MCF 10A (cell line): ENCODE measurements at regions of chr1 and their contacts with region 1.

Region 1: GRCh38 chr1:54564312-54565112 is 16.5 kb downstream of the ACOT11 start:
- DNase-seq: peak; percentile 91
- H3K4me3 Mint-ChIP-seq: peak overlapping the region; percentile 62
- H3K27ac Mint-ChIP-seq: peak overlapping the region; percentile 32
- H3K4me1 Mint-ChIP-seq: peaks cover 34% of the 10 kb centered on the region
- H3K27me3 Mint-ChIP-seq: no peaks in the 10 kb centered on the region
- CTCF ChIP-seq: no peak

Region 2: GRCh38 chr1:54474639-54475251 is 89.8 kb before region 1 on chr1:
- CTCF ChIA-PET with region 1: no interaction called
- POLR2A ChIA-PET with region 1: no interaction called
- intact Hi-C with region 1: no loop called
- DNase-seq: no peak
- H3K4me3 Mint-ChIP-seq: no peak overlapping the region
- H3K27ac Mint-ChIP-seq: no peak overlapping the region
- H3K4me1 Mint-ChIP-seq: no peaks in the 10 kb centered on the region
- H3K27me3 Mint-ChIP-seq: peaks cover 25% of the 10 kb centered on the region
- CTCF ChIP-seq: no peak

Region 3: GRCh38 chr1:54542120-54542961 is 22.2 kb before region 1 on chr1:
- CTCF ChIA-PET with region 1: interaction called, 11 read pairs
- POLR2A ChIA-PET with region 1: interaction called, 33 read pairs
- intact Hi-C with region 1: no loop called
- DNase-seq: peak; percentile 95
- H3K4me3 Mint-ChIP-seq: peak overlapping the region; percentile 84
- H3K27ac Mint-ChIP-seq: peak overlapping the region; percentile 52
- H3K4me1 Mint-ChIP-seq: peaks cover 26% of the 10 kb centered on the region
- H3K27me3 Mint-ChIP-seq: no peaks in the 10 kb centered on the region
- CTCF ChIP-seq: no peak

Region 4: GRCh38 chr1:54547601-54548388 is 16.7 kb before region 1 on chr1 and contains the start of gene ACOT11:
- CTCF ChIA-PET with region 1: interaction called, 11 read pairs
- POLR2A ChIA-PET with region 1: interaction called, 33 read pairs
- intact Hi-C with region 1: no loop called
- DNase-seq: peak; percentile 22
- H3K4me3 Mint-ChIP-seq: no peak within 1 kb of the TSS
- H3K27ac Mint-ChIP-seq: no peak within 1 kb of the TSS
- H3K4me1 Mint-ChIP-seq: peaks cover 22% of the 10 kb centered on the region
- H3K27me3 Mint-ChIP-seq: no peaks in the 10 kb centered on the region
- CTCF ChIP-seq: no peak
- total RNA-seq, gene ACOT11: 4.5 and 5.3 TPM in 2 replicates

Region 5: DNA sequence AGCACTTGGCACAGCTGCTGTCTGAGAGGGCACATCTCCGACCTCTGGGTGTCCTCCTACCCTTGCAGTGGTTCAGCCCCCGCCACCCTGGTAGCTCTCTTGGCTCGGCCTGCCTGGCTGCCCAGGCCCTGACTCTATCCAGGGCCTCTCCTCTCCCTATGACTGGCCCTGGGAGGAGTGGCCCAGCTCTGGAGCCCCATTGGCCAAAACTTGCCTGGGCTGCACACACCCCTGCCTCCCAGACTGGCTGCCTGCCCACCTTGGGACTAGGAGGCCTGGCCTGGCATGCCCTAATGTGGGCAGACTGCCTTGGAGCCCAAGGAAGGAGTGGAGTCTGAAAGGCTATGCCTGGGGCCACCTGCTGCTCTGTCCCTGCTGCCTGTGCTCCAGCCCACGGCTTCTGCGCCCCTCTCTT is 17.1 kb after region 1 on chr1:
- CTCF ChIA-PET with region 1: interaction called, 4 read pairs
- POLR2A ChIA-PET with region 1: interaction called, 29 read pairs
- intact Hi-C with region 1: no loop called
- DNase-seq: peak; percentile 98
- H3K4me3 Mint-ChIP-seq: no peak overlapping the region
- H3K27ac Mint-ChIP-seq: peak overlapping the region; percentile 95
- H3K4me1 Mint-ChIP-seq: peaks cover 22% of the 10 kb centered on the region
- H3K27me3 Mint-ChIP-seq: no peaks in the 10 kb centered on the region
- CTCF ChIP-seq: no peak